ENCODE measurements at regions of chr19 and their contacts with region 1.

Region 1: DNA sequence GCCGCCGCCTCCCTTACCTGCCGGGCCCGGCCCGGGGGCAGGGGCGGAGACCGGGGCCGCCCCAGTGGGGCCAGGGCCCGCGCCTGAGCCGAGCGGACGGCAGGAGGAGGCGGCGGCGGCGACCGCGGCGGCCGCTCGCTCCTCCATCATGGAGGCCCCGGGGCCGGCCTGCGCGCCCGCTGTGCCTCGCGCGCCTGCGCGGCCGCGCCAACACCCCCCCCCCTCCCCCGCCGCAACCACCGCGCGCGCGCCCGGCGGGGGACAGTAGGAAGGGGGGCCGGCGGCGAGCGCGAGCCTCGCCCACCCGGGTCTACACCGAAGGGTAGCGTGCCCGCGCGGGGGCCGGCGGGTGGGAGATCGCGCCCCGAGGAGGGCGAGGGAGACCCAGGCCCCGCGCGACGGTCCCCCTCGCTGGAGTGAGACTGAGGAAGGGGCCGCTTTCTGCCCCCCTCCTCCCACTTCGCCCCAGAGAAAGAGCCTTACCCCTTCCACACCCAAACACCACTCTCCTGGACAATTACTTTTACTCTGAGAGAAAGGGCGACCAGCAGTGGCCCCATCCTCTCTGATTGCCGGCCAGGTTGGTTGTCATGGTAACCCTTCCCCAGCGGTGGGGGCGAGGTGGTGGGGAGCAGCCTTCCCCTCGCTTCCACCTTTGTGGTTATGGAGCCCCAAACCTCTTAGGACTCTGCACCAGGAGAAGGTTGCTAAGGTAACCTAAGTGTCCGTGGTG is at the start of gene STRN4:
- DNase-seq: peak in 1 of 2 experiments; percentile 39
- H3K4me3 ChIP-seq: peak within 1 kb of the TSS; percentile 88
- H3K27ac ChIP-seq: no peak within 1 kb of the TSS
- H3K4me1 ChIP-seq: peaks cover 11% of the 10 kb centered on the region
- H3K27me3 ChIP-seq: no peaks in the 10 kb centered on the region
- CTCF ChIP-seq: no peak
- total RNA-seq, gene STRN4: 93.3 and 131 TPM in 2 replicates

Region 2: GRCh38 chr19:46634045-46634655 is 112.3 kb before region 1 on chr19:
- CTCF ChIA-PET with region 1: interaction called, 11 read pairs
- POLR2A ChIA-PET with region 1: no interaction called
- intact Hi-C with region 1: no loop called
- DNase-seq: peak; percentile 79 to 97
- H3K4me3 ChIP-seq: peak overlapping the region; percentile 53
- H3K27ac ChIP-seq: no peak overlapping the region
- H3K4me1 ChIP-seq: peaks cover 14% of the 10 kb centered on the region
- H3K27me3 ChIP-seq: peaks cover 68% of the 10 kb centered on the region
- CTCF ChIP-seq: no peak

Region 3: DNA sequence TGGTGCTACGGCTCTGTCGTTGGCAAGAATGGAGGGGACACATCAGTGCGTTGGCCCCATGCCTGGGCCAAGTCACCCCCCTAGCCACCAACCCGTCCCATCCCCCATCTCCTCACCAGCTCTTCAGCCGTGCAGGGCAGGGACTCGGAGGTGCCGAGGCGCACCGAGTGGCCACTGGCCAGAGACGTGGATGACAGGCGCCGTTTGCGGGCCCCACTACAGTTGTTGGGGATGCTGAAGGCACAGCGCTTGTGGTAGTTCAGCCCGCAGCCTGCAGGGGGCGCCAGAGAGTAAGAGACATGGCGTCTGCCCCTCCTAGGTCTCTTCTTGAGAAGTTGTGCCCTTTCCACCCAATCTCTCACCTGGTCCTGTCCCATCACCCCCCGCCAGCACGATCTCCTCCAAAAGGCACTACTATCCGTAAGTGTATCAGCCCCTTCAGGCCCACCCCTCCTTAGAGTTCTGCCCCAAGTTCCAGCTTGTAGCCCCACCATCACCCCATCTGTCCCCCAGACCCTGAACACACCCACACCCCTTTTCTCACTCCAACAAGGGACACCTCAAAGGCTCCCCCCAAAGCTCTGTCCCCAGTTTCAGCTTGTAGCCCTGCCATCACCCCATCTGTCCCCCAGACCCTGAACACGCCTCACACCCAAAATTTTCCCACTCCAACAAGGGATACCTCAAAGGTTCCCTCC is 41.9 kb before region 1 on chr19:
- CTCF ChIA-PET with region 1: interaction called, 11 read pairs
- POLR2A ChIA-PET with region 1: no interaction called
- intact Hi-C with region 1: no loop called
- DNase-seq: peak; percentile 34 to 70
- H3K4me3 ChIP-seq: no peak overlapping the region
- H3K27ac ChIP-seq: no peak overlapping the region
- H3K4me1 ChIP-seq: no peaks in the 10 kb centered on the region
- H3K27me3 ChIP-seq: no peaks in the 10 kb centered on the region
- CTCF ChIP-seq: peak; percentile 98

Region 4: GRCh38 chr19:46803555-46803954 is 57.1 kb after region 1 on chr19:
- CTCF ChIA-PET with region 1: interaction called, 16 read pairs
- POLR2A ChIA-PET with region 1: no interaction called
- intact Hi-C with region 1: no loop called
- DNase-seq: no peak
- H3K4me3 ChIP-seq: no peak overlapping the region
- H3K27ac ChIP-seq: no peak overlapping the region
- H3K4me1 ChIP-seq: peaks cover 5% of the 10 kb centered on the region
- H3K27me3 ChIP-seq: no peaks in the 10 kb centered on the region
- CTCF ChIP-seq: no peak

Region 5: DNA sequence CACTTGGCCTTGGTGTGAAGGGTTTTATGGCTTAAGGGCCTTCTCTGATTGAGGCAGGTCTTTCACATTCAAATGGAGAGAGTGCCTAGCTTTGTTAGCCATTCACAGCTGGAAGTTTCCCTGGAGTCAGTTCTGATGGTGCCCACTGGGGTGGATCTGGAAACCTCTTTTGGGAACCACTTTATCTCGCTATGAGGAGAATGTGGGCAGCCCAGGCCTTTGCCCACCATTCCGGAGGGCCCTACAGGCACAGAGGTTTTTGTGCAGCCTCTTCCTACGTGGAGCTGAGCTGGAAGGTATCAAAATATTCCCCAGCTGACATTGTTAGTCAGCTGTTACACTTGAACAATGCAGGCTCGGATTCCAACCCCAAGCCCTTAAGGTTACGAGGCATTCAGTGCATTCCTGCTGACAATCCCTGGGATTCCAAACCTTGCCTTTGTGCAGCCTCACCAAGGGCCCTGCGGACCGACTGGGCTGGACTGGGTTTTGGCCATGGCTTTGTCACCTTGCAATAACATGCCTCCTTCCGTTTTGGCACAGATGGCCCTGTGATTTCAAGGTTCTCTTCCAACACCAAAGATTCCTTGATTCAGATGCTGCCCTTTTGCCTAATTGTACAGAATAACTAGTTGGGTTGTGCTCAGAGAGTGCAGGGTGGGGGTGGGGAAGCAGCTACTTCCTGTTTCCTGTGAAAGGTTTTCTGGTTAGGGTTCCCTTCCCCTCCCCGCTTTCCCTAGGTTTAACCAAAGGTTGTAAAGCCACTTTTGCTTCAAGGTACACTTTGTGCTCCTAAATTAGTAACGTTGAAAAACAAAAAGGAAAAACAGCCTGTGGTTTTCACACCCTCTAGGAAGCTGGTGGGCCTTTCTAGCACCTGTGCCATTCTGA is 411.2 kb after region 1 on chr19:
- CTCF ChIA-PET with region 1: interaction called, 15 read pairs
- POLR2A ChIA-PET with region 1: no interaction called
- intact Hi-C with region 1: no loop called
- DNase-seq: peak; percentile 59 to 78
- H3K4me3 ChIP-seq: no peak overlapping the region
- H3K27ac ChIP-seq: peak overlapping the region; percentile 78
- H3K4me1 ChIP-seq: peaks cover 55% of the 10 kb centered on the region
- H3K27me3 ChIP-seq: no peaks in the 10 kb centered on the region
- CTCF ChIP-seq: 0 out of 2 replicates have a peak, but pooled peaks have one; percentile 15